ENCODE measurements at regions of chr2 and their contacts with region 1.

Region 1: DNA sequence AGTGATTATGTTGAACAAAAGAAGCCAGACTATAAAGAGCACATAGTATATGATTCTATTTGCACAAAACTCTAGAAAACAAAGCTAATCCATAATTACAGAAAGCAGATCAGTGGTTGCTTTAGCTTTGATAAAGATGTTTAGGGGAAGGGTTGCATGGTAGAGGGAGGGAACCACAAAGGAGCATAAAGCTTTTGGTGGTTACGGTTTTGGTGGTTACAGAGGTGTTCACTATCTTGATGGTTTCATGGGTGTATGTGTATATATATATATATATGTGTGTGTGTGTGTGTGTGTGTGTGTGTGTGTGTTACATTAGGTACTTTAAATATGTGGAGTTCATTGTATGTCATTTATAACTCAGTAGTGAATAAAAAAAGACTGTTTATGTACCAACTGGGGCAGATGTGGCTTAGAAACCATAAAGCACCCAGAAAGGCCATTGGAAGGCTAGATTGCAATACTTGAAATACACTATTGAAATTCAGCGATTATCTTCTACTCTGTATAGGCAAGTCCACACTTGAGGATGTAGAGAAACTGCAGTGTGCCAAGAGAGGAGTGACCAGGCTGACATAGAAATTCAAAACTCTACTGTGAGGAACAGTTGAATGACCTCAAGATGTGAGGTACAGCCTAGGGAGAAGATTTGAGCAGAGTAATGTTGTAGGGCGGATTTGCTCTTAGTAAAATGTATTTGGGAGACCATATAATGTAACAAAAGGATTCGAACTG is 60.6 kb downstream of the CAB39 start:
- DNase-seq: peak; percentile 65
- H3K4me3 Mint-ChIP-seq: peak overlapping the region; percentile 2
- H3K27ac Mint-ChIP-seq: peak overlapping the region; percentile 71
- H3K4me1 Mint-ChIP-seq: peaks cover 88% of the 10 kb centered on the region
- H3K27me3 Mint-ChIP-seq: no peaks in the 10 kb centered on the region

Region 2: GRCh38 chr2:230762317-230762896 is 10.8 kb before region 1 on chr2:
- CTCF ChIA-PET with region 1: interaction called, 13 read pairs
- POLR2A ChIA-PET with region 1: no interaction called
- DNase-seq: peak; percentile 29
- H3K4me3 Mint-ChIP-seq: no peak overlapping the region
- H3K27ac Mint-ChIP-seq: no peak overlapping the region
- H3K4me1 Mint-ChIP-seq: peaks cover 45% of the 10 kb centered on the region
- H3K27me3 Mint-ChIP-seq: no peaks in the 10 kb centered on the region